HepG2 (cell line): ENCODE measurements at regions of chr7 and their contacts with region 1.

Region 1: DNA sequence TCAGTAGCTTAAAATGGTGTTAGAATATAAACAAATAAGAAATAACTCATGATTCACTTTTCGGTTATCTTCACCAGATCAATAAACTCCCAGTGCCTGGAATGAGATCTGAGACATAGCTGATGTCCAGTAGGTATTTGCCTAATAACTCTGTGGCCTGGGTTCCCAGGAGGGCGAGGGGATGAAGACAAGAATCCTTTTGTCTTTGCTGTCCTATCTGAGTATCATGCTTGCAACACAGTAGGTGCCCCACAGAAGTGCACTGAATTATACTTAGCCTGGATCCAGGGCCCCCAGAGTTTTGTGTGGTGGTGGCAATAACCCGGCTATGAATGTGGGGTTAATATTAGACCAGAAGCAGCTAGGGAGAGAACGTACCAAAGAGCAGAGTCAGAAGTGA is 350.1 kb upstream of the AOAH start:
- DNase-seq: peak; percentile 99
- ATAC-seq: peak; percentile 100
- H3K4me3 ChIP-seq: peak overlapping the region in 1 of 3 experiments; percentile 35; a peak in 1 of 6 replicates
- H3K27ac ChIP-seq: peak overlapping the region; percentile 82
- H3K4me1 ChIP-seq: peaks cover 30% of the 10 kb centered on the region
- H3K27me3 ChIP-seq: no peaks in the 10 kb centered on the region
- CTCF ChIP-seq: no peak
- EP300 ChIP-seq: peak; percentile 54 to 94; a peak in 3 of 4 replicates
- POLR2A ChIP-seq: no peak
- RAD21 ChIP-seq: no peak; the same call in 1 of the 2 replicates

Region 2: DNA sequence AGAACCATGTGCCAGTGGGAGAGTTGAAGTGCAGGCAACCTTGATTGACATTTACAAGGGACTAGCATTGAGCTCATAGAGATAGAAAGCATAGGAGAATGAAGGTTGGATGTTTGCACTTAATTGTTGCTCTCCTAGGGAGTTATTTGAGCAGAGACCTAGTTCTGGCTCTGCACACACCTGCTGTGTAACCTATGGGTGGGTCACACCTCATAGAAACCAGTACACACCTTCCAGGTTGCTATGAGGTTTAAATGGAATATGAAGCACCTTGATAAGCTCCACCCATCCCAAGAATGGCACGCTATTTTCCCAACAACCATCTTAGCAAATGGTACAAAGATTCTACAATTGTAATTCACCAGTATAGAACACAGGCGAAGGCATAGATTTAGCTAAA is 263.9 kb before region 1 on chr7:
- CTCF ChIA-PET with region 1: no interaction called
- POLR2A ChIA-PET with region 1: no interaction called
- in situ Hi-C with region 1: no loop called
- intact Hi-C with region 1: no loop called
- DNase-seq: no peak
- ATAC-seq: no peak
- H3K4me3 ChIP-seq: no peak overlapping the region
- H3K27ac ChIP-seq: no peak overlapping the region
- H3K4me1 ChIP-seq: peaks cover 25% of the 10 kb centered on the region
- H3K27me3 ChIP-seq: no peaks in the 10 kb centered on the region; a peak in 1 of 5 replicates
- CTCF ChIP-seq: no peak
- EP300 ChIP-seq: no peak
- POLR2A ChIP-seq: no peak
- RAD21 ChIP-seq: no peak

Region 3: DNA sequence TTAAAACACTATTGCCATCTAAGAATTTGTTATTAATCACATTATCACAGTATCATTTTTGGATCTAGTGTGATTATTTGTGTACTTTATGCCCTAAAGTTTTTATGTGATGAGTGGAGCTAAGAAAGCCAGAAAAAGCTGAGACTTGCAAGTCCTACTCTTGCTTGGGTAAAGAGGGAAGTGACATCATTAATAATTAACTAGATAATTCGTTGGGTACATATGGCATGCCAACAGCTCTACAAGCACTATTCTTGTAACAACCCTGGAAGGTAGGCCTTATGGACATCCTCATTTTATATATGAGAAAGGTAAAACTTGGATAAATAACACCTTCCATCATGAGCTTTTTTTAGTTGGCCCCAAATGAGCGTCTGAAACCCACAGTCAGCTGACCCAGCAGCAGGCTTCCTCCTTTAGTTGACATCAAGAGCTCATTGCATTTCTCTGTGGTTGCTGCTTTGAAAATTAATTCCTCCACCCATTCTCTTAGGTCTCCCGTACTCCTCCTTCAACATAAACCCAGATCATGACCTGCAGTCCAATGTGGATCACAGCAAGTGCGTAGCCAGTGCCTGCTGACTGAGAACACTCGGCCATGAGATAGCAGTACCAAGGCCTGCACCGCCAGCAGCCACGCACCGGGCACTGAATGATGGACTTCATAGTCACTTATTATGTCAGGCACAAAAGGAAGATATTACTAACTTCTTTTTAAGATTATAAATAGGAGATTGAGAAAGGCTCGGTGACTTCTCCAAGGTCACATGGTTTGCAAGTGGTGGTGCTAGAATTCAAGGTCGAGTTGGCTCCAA is 58.1 kb before region 1 on chr7:
- CTCF ChIA-PET with region 1: no interaction called
- POLR2A ChIA-PET with region 1: interaction called, 4 read pairs
- in situ Hi-C with region 1: no loop called
- intact Hi-C with region 1: loop called (anchors 5 kb)
- DNase-seq: peak; percentile 77
- ATAC-seq: peak; percentile 97
- H3K4me3 ChIP-seq: peak overlapping the region in 2 of 3 experiments; percentile 13 to 28; a peak in 2 of 6 replicates
- H3K27ac ChIP-seq: peak overlapping the region; percentile 60
- H3K4me1 ChIP-seq: peaks cover 49% of the 10 kb centered on the region
- H3K27me3 ChIP-seq: no peaks in the 10 kb centered on the region
- CTCF ChIP-seq: no peak
- EP300 ChIP-seq: no peak
- POLR2A ChIP-seq: no peak
- RAD21 ChIP-seq: no peak

Region 4: GRCh38 chr7:37109843-37110242 is 35.5 kb after region 1 on chr7:
- CTCF ChIA-PET with region 1: no interaction called
- POLR2A ChIA-PET with region 1: no interaction called
- in situ Hi-C with region 1: no loop called
- intact Hi-C with region 1: loop called (anchors 5 kb)
- DNase-seq: peak; percentile 35
- ATAC-seq: peak; percentile 98
- H3K4me3 ChIP-seq: no peak overlapping the region
- H3K27ac ChIP-seq: no peak overlapping the region
- H3K4me1 ChIP-seq: peaks cover 31% of the 10 kb centered on the region
- H3K27me3 ChIP-seq: 0 out of 5 replicates have a peak, but pooled peaks cover 0 to 1% of the 10 kb centered on the region in 2 experiments
- CTCF ChIP-seq: 0 out of 2 replicates have a peak, but pooled peaks have one; percentile 35
- EP300 ChIP-seq: no peak
- POLR2A ChIP-seq: no peak
- RAD21 ChIP-seq: no peak

Region 5: DNA sequence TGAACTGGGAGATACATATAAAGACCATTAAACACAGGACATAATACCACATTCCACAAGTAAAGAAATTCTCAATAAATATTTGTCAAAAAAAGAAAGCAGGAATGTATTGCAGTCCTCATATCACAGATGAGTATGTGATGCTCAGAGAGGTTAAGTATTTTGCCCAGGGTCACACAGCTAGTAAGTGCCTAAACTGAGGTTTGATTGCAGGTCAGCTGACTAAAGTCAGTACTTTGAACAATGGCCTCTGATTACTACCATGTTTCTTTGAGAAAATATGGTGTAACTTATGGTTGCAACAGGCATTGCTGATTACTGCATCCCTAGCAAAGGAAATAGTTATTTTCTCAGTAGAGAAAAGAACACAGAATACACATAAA is 107.2 kb after region 1 on chr7:
- CTCF ChIA-PET with region 1: no interaction called
- POLR2A ChIA-PET with region 1: no interaction called
- in situ Hi-C with region 1: no loop called
- intact Hi-C with region 1: loop called (anchors 5 kb)
- DNase-seq: no peak
- ATAC-seq: no peak
- H3K4me3 ChIP-seq: no peak overlapping the region
- H3K27ac ChIP-seq: no peak overlapping the region
- H3K4me1 ChIP-seq: peaks cover 41% of the 10 kb centered on the region
- H3K27me3 ChIP-seq: no peaks in the 10 kb centered on the region
- CTCF ChIP-seq: no peak
- EP300 ChIP-seq: no peak
- POLR2A ChIP-seq: no peak
- RAD21 ChIP-seq: no peak